ENCODE measurements at regions of chr6 and their contacts with region 1.

Region 1: DNA sequence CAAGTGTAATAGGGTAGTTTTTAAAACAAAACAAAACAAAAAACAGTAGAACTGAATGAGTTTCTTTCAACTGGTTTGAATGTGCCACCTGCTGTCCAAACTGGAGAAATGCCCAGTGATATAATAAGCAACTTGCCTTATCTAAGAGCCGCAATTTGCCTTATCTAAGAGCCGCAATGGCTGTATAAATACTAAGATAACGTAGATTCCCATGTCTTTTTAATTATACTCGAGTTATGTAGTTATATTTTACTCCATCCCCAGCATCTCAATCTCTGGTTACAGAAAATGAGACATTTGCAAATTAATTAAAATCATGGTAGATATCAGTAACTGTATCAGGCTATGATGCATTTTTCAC is 67.2 kb downstream of the RPP40 start:
- DNase-seq: peak; percentile 58
- ATAC-seq: no peak
- H3K4me3 ChIP-seq: no peak overlapping the region
- H3K27ac ChIP-seq: no peak overlapping the region
- H3K4me1 ChIP-seq: peaks cover 22% of the 10 kb centered on the region
- H3K27me3 ChIP-seq: no peaks in the 10 kb centered on the region
- CTCF ChIP-seq: peak; percentile 81

Region 2: DNA sequence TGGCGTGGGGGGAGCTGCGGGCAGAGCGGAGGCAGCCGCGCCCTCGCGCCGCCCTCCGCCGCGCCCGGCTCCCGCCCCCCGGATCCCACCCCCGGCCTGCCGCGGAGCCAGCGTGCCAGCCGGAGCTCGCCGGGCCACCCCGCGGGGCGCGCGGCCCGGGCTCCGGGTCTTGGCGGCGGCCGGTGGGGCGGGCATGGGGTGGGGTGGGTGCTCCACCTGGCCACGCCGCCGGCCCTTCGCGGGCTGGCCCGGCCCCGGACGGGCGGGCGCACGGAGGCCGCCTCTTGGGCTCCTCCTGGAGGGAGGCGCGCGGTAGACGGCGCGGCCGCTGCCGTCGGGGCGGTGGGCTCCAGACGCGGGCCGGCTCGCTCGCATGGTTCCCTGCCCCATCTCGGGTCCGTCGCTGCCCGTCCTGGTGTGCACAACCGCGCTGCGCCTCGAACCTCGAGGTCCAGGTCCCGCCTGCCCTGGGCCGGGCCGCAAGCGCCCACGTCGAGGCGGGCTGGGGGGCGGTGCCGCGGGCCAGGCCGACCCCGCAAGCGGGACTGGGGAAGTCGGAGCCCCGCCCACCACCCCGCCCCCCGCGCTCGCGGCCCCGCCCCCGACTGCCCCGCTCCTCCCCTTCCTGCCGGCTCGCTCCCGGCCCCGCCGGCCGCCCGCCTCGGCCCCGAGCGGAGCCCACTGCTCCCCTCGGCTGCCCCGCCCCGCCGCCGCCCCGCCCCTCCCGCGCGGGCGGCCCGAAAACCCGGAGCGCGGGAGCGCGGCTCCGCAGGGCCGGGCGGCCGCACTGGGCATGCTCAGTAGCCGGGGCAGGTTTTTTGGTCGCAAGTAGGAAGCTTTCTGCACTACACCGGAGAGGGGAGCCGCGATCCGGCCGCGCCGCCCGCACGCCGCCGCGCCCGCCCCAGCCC is 160.8 kb before region 1 on chr6 and contains the start of gene CDYL:
- CTCF ChIA-PET with region 1: no interaction called
- POLR2A ChIA-PET with region 1: no interaction called
- intact Hi-C with region 1: loop called (anchors 1 kb)
- DNase-seq: peak; percentile 94
- ATAC-seq: peak; percentile 79
- H3K4me3 ChIP-seq: peak within 1 kb of the TSS; percentile 74
- H3K27ac ChIP-seq: peak within 1 kb of the TSS; percentile 39; the same call in 1 of the 2 replicates
- H3K4me1 ChIP-seq: peaks cover 5% of the 10 kb centered on the region; the same call in 1 of the 2 replicates
- H3K27me3 ChIP-seq: no peaks in the 10 kb centered on the region
- CTCF ChIP-seq: peak; percentile 29; the same call in 1 of the 2 replicates
- total RNA-seq, gene CDYL: 34.4 and 38.4 TPM in 2 replicates

Region 3: DNA sequence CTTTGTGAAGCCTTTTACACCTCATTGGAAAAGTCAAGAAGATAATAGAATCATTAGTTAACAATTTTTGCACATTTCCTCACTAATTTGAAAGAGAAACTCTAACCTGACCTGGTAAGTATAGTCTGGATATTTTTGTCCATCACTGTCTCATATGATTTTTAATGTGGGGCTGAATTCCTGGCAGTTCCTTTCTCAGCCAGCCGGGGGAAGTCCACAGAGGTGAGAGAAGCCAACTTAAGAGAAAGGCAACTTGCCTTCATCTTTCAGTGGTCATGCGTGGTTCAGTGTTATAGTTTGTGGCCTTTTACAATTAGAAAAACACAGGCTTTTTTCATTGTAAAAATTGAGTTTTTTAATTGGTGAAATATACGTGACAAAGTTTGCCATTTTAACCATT is 79.9 kb before region 1 on chr6:
- CTCF ChIA-PET with region 1: no interaction called
- POLR2A ChIA-PET with region 1: no interaction called
- intact Hi-C with region 1: loop called (anchors 5 kb)
- DNase-seq: no peak
- ATAC-seq: no peak
- H3K4me3 ChIP-seq: no peak overlapping the region
- H3K27ac ChIP-seq: no peak overlapping the region
- H3K4me1 ChIP-seq: peaks cover 16% of the 10 kb centered on the region
- H3K27me3 ChIP-seq: no peaks in the 10 kb centered on the region
- CTCF ChIP-seq: peak; percentile 37; the same call in 1 of the 2 replicates

Measured in PC-3 (cell line).